GM12878 (cell line): ENCODE measurements at regions of chr2 and their contacts with region 1.

Region 1: DNA sequence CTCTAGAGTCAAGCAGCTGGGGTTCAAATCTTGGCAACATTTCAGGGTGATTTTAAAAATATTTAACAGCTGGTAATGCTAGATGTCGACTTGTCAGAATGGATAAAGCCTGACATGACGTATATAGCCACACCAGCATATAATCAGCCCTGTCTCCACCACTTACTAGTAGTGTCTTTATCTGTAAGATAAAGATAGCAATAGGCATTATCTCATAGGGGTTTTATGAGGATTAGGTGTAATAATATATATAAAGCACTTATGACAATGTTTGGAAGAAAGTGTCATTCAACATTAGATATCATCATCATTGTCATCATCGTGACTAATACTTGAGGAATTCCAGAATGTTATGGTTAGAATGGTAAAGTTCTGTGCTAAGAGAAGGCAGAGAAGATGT is 369.0 kb upstream of the CWC22 start:
- DNase-seq: no peak
- ATAC-seq: no peak
- H3K4me3 ChIP-seq: no peak overlapping the region
- H3K27ac ChIP-seq: no peak overlapping the region
- H3K4me1 ChIP-seq: no peaks in the 10 kb centered on the region
- H3K27me3 ChIP-seq: no peaks in the 10 kb centered on the region
- CTCF ChIP-seq: no peak
- EP300 ChIP-seq: no peak
- POLR2A ChIP-seq: no peak
- RAD21 ChIP-seq: no peak

Region 2: GRCh38 chr2:180169474-180169873 is 206.6 kb before region 1 on chr2:
- CTCF ChIA-PET with region 1: no interaction called
- POLR2A ChIA-PET with region 1: no interaction called
- RAD21 ChIA-PET with region 1: no interaction called
- SMC1A ChIA-PET with region 1: no interaction called
- in situ Hi-C with region 1: no loop called
- intact Hi-C with region 1: no loop called
- DNase-seq: no peak
- ATAC-seq: no peak
- H3K4me3 ChIP-seq: no peak overlapping the region
- H3K27ac ChIP-seq: no peak overlapping the region
- H3K4me1 ChIP-seq: no peaks in the 10 kb centered on the region
- H3K27me3 ChIP-seq: no peaks in the 10 kb centered on the region
- CTCF ChIP-seq: no peak
- EP300 ChIP-seq: no peak
- POLR2A ChIP-seq: no peak
- RAD21 ChIP-seq: no peak

Region 3: DNA sequence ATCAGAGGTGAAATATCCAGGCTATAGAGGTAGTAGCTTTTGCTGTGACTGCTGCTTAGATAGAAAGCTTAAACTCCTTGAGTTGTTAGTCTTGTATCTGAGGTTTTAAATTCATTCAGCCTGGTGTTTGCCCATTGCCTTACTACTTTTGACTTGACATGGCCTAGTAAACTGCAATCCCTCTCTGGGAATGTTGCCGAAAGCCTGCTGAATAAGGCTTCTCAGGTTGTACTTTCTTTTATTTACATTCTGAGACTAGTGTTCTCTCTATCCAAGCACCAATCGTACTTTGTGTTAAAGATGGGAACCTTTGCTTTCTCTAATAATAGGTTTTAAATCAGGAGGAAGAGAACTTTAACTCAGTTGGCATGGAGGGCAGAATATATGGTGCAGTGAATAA is 11.3 kb before region 1 on chr2:
- CTCF ChIA-PET with region 1: interaction called, 4 read pairs
- POLR2A ChIA-PET with region 1: no interaction called
- RAD21 ChIA-PET with region 1: interaction called, 3 read pairs
- SMC1A ChIA-PET with region 1: interaction called, 10 read pairs
- in situ Hi-C with region 1: no loop called
- intact Hi-C with region 1: no loop called
- DNase-seq: no peak
- ATAC-seq: no peak
- H3K4me3 ChIP-seq: no peak overlapping the region
- H3K27ac ChIP-seq: no peak overlapping the region
- H3K4me1 ChIP-seq: peaks cover 6% of the 10 kb centered on the region
- H3K27me3 ChIP-seq: no peaks in the 10 kb centered on the region
- CTCF ChIP-seq: no peak
- EP300 ChIP-seq: no peak
- POLR2A ChIP-seq: no peak
- RAD21 ChIP-seq: no peak

Region 4: DNA sequence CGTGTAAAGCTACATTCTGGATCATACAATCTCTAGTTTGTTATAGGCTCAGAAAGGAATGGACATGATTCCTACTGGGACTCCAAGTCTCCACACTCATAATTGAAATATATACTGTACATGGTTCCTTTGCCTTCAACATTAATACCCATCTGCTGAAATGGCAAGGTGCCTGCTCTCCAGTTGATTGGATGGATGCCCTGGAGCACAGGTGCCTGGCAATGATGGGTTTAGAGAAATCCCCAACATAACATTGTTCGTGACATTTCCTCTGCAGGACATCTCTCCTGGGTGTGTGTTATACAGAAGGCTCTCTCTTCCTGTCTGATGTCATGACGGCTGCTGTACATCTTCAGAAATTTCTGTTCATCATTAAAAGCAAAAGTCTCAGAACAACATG is 80.7 kb after region 1 on chr2:
- CTCF ChIA-PET with region 1: no interaction called
- POLR2A ChIA-PET with region 1: no interaction called
- RAD21 ChIA-PET with region 1: no interaction called
- SMC1A ChIA-PET with region 1: no interaction called
- in situ Hi-C with region 1: no loop called
- intact Hi-C with region 1: no loop called
- DNase-seq: no peak
- ATAC-seq: no peak
- H3K4me3 ChIP-seq: no peak overlapping the region
- H3K27ac ChIP-seq: no peak overlapping the region
- H3K4me1 ChIP-seq: no peaks in the 10 kb centered on the region
- H3K27me3 ChIP-seq: no peaks in the 10 kb centered on the region
- CTCF ChIP-seq: no peak
- EP300 ChIP-seq: no peak
- POLR2A ChIP-seq: no peak
- RAD21 ChIP-seq: no peak